ENCODE measurements at regions of chr5 and their contacts with region 1.

Region 1: DNA sequence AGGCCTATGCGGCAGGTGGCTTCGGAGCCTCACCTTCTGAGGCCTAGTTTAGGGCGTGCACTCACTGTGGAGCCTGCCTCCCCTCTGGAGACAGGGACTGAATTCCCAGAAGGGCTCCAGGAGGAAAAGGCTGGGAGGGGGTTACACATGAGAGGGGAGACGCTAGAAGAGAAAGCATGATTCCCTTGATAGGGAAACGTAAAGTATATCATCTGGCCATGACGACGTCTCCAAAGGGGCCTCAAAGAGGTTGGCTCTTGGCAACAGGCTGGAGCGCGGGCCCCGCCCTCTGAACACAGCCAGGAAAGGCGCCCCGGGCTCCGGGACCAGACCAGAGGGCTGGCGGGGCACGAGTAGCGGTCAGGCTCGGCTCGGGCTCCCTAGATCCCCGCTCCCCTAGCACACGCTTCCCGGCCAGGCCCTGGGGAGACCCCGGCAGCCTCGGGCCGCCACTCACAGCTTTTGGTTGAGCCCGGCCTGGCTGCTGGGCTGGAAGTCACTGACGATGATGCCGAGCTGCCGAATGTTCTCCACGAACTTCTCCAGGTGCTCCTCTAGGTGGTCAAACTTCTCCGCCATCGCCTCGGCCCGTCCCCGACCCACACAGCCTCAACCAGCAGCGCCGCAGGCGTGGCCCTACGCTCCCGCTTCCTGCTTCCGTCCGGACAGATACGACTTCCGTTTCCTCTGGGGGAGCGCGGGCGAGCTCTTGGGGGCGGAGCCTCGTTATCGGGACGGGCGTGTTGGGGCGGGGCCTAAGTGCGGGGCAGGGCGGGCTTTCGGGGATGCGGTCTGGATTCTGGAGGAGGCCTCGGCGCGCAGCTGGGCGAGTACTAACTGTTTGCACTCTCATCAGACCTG is at the start of gene MED10:
- DNase-seq: peak; percentile 98
- H3K4me3 Mint-ChIP-seq: peak within 1 kb of the TSS; percentile 99
- H3K27ac Mint-ChIP-seq: peak within 1 kb of the TSS; percentile 96
- H3K4me1 Mint-ChIP-seq: peaks cover 35% of the 10 kb centered on the region
- H3K27me3 Mint-ChIP-seq: no peaks in the 10 kb centered on the region
- total RNA-seq, gene MED10: 49.3 to 50.0 TPM

Region 2: DNA sequence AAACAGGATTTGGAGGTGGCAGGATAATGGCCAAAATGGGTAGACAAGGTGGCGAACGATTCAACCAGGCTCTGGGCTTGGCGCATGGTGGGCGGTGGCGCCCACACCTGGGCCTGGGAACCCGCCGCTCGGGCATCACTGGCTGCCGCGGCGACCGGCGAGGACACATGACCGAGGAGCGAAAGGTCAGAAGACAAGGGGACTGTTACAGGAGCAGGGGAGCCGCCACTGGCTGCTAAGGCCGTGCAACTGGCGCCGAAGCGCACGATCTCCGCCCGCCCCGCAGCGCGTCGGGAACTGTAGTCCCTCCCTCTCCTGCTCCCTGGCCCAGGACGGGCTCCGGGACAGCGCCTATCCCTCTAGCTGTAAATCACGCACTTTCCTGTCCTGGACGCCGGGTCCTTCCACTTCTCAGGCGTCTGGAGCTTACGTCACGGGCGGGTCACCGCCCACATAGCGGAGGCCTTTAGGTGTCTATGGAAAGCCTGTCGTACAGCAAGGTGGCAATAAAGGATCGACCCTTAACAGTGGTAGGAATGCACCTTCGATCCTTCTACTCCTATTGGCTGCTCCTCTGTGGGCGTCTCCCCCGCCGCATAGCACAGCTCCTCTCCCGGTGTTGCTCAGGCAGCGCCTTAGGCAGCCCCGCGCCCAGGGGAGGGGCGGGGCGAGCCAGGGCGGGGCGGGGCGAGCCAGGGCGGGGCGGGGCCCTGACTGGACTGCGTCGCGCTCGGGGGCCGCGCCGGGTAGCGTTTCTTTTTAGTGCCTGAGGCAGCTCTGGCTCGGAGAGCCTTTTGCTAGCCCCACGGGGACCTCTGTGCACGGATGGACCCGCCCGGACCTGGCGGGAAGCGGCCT is 955.9 kb before region 1 on chr5 and contains the start of gene ICE1:
- CTCF ChIA-PET with region 1: no interaction called
- intact Hi-C with region 1: loop called (anchors 1 kb)
- DNase-seq: peak; percentile 95
- H3K4me3 Mint-ChIP-seq: peak within 1 kb of the TSS; percentile 95
- H3K27ac Mint-ChIP-seq: peak within 1 kb of the TSS; percentile 91
- H3K4me1 Mint-ChIP-seq: peaks cover 19% of the 10 kb centered on the region
- H3K27me3 Mint-ChIP-seq: no peaks in the 10 kb centered on the region
- total RNA-seq, gene ICE1: 19.1 to 20.6 TPM

Region 3: DNA sequence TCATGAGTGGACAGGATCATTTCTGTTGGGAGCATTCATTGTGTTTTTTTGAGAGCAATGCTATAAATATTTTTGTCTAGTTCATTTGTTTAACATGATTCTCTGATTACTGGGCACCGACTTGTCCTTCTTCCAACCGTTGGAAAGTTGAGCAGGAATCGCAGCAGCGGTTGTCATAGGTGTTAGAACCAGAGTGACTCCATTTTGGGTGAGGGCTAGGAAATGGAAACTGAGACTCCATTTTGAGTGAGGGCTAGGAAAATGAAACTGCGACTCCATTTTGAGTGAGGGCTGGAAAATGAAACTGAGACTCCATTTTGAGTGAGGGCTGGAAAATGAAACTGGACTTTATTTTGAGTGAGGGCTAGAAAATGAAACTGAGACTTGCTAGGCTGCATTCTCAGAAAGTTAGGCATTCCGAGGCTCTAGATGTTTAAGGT is 855.0 kb before region 1 on chr5:
- CTCF ChIA-PET with region 1: no interaction called
- intact Hi-C with region 1: loop called (anchors 5 kb)
- DNase-seq: peak; percentile 12
- H3K4me3 Mint-ChIP-seq: no peak overlapping the region
- H3K27ac Mint-ChIP-seq: no peak overlapping the region
- H3K4me1 Mint-ChIP-seq: peaks cover 35% of the 10 kb centered on the region
- H3K27me3 Mint-ChIP-seq: no peaks in the 10 kb centered on the region

Region 4: DNA sequence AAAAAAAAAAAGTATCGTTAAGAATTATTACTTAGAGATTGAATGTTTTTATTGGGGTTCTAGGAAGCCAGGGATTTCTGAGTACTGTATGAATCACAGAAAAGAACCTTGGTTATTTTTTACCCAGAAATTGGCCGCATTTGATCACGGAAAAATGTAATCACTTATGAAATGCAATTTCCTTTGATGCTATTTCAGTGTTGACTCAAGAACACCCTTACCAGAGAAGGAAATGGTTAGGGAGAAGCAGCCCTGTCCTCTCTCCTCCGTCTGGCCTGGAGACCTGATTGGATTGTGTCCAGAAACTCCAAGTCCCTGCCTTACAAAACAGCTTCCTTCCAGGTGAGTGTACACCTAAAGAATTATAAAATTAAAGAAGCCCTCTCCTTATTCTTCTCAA is 116.5 kb before region 1 on chr5:
- CTCF ChIA-PET with region 1: no interaction called
- intact Hi-C with region 1: no loop called
- DNase-seq: peak; percentile 12
- H3K4me3 Mint-ChIP-seq: no peak overlapping the region
- H3K27ac Mint-ChIP-seq: peak overlapping the region; percentile 1
- H3K4me1 Mint-ChIP-seq: no peaks in the 10 kb centered on the region
- H3K27me3 Mint-ChIP-seq: no peaks in the 10 kb centered on the region

Region 5: DNA sequence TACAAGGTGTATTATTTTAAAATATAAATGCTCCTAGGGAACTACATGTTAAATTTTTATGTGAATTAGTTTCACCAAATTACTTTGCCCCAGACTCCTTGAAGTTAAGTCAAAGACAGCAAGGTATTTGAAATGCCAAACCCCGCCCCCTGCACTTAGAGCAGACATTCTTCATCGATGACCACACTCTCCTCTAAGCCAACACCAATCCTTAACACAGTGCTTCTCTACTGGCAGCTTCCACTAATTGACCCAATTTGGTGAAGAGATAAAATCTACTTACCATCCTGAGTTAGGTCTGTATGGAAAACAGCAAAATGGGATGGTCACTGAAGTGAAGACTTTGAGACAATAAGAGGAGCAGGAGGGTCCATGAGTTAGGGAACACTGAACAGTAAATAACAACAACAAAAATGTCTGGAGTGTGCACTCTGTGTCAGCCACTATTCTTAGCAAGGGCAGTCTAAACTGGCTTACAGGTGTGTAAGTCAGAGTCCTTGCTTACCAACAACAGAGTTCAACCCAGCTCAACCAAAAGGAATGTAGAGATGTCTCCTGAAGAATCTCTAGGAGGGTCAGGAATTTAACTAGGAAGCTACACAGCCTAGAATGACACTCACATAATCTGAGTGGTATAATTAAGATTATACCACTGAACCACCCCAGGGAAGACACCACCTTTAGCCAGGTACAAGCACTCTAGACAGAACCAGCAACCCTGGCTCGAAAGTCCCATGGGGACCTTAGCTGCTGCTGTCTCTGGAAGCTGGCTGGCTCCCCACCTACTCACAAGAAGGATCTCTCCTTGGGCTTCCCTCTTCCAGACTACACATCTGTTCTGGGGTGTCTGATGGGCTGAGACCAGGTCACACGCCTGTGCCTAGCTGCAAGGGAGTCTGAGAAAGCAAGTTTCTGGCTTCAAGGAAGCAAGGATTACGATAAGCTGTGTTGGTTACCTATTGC is 61.7 kb after region 1 on chr5:
- CTCF ChIA-PET with region 1: no interaction called
- intact Hi-C with region 1: no loop called
- DNase-seq: no peak
- H3K4me3 Mint-ChIP-seq: no peak overlapping the region
- H3K27ac Mint-ChIP-seq: no peak overlapping the region
- H3K4me1 Mint-ChIP-seq: no peaks in the 10 kb centered on the region
- H3K27me3 Mint-ChIP-seq: peaks cover 40% of the 10 kb centered on the region

Region 6: DNA sequence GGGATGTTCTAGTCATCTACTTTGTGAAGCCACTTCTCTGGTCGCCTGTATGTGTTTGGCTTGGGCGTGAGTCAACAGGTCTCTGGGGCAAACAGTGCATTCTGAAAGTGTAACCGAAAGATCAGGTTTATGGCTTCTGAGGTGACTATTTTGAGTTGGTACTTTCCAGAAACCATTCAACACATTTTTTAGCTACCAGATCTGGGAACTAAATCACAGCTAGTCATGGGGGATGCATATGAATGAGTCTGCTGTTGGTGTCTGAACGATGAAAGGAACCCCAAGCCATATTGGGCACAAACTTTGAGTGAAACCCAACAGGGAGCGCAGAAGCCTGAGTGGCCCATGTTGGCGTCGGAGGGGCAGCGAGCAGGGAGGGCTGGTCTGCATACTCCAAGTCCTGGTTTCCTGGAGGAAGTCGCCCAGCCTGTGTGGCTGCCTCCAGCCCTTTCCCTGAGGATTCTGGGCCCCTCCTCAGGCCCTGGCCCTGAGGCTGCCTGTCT is 105.8 kb after region 1 on chr5:
- CTCF ChIA-PET with region 1: interaction called, 3 read pairs
- intact Hi-C with region 1: loop called (anchors 5 kb)
- DNase-seq: peak; percentile 28
- H3K4me3 Mint-ChIP-seq: no peak overlapping the region
- H3K27ac Mint-ChIP-seq: no peak overlapping the region
- H3K4me1 Mint-ChIP-seq: peaks cover 35% of the 10 kb centered on the region
- H3K27me3 Mint-ChIP-seq: peaks cover 2% of the 10 kb centered on the region

Region 7: GRCh38 chr5:6632917-6633468 is 254.9 kb after region 1 on chr5 and contains the starts of genes NSUN2 and SRD5A1:
- CTCF ChIA-PET with region 1: no interaction called
- intact Hi-C with region 1: loop called (anchors 1 kb)
- DNase-seq: peak; percentile 88
- H3K4me3 Mint-ChIP-seq: peak within 1 kb of the TSS; percentile 93
- H3K27ac Mint-ChIP-seq: peak within 1 kb of the TSS; percentile 98
- H3K4me1 Mint-ChIP-seq: peaks cover 35% of the 10 kb centered on the region
- H3K27me3 Mint-ChIP-seq: no peaks in the 10 kb centered on the region
- total RNA-seq, gene NSUN2: 59.0 to 60.5 TPM
- total RNA-seq, gene SRD5A1: 5.2 to 5.4 TPM

Region 8: DNA sequence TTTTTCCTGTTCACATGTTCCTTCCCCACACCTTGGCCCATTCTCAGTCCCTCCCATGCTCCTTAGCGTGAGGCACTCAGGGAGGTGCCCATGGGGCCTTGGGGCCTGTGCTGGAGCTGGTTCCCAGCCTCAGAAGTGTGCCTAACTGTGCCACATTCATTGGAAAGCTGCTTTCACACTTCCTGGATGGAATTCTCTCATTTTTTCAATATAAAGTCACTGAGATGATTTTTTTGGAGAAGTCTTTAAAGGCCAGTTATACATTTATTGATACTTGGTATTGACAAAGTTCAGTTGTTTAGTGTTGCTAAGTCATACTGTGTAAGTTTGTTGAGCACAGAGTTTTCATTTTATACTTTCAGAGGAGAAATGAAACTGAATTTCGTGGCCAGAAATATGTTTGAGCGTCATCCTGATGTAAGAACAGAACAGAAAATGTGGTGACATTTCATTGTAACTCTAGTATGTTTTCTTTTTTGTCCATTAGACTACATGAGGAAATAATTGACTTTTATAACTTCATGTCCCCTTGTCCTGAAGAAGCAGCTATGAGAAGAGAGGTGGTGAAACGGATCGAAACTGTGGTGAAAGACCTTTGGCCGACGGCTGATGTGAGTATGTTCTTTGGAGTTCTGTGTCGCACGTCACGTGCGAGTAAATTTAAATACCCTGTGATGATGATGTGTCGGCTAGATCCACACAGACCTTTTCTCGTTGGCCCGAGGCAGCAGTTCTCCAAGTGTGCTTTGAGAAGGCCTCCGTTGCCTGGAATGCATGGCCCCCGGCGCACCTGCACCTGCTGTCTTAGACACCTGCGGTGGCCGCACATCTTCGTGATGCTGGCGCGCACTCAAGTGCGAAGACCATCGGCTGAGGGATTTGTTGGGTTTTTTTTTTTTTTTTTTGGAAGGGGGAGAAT is 359.1 kb after region 1 on chr5:
- CTCF ChIA-PET with region 1: no interaction called
- intact Hi-C with region 1: loop called (anchors 5 kb)
- DNase-seq: no peak
- H3K4me3 Mint-ChIP-seq: no peak overlapping the region
- H3K27ac Mint-ChIP-seq: peak overlapping the region; percentile 78
- H3K4me1 Mint-ChIP-seq: peaks cover 50% of the 10 kb centered on the region
- H3K27me3 Mint-ChIP-seq: no peaks in the 10 kb centered on the region

Region 9: DNA sequence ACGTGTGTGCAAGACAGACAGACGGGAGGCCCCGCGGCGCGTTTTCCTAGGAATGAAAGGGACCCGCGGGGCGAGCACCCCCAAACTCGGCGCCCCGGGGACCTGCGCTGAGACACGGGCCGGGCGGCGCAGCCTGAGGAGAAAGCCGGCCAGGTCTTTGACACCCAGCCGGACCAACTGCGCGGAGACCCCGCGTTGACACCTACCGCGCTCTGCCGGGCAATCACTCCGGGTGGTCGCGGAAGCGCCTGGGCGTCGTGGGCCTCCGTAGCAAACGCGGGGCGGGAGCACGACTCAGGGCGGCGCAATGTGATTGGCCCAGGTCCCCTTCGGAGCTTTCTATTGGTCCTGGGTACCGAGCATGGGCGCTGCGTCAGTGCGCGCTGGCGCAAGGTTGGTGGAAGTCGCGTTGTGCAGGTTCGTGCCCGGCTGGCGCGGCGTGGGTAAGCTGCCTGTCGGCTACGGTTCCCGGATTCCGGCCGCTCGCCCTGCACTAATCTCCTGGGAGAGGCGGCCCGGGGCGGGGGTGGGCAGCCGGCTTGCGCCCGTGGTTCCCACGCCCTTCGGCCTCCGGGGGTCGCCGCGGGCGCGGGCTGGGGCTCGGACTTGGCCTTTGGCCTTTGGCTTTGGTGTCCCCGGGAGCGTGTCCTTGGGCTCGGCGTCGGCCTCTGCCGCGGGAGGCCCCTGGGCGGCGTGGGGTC is 1490.8 kb after region 1 on chr5 and contains the starts of genes FASTKD3 and MTRR:
- CTCF ChIA-PET with region 1: no interaction called
- intact Hi-C with region 1: loop called (anchors 5 kb)
- DNase-seq: peak; percentile 91
- H3K4me3 Mint-ChIP-seq: peak within 1 kb of the TSS; percentile 96
- H3K27ac Mint-ChIP-seq: peak within 1 kb of the TSS; percentile 82
- H3K4me1 Mint-ChIP-seq: peaks cover 64% of the 10 kb centered on the region
- H3K27me3 Mint-ChIP-seq: no peaks in the 10 kb centered on the region
- total RNA-seq, gene FASTKD3: 4.0 to 7.7 TPM
- total RNA-seq, gene MTRR: 34.0 to 35.1 TPM